Ovary (tissue), 10 donors: ENCODE measurements at regions of chr4 and their contacts with region 1.

Region 1: DNA sequence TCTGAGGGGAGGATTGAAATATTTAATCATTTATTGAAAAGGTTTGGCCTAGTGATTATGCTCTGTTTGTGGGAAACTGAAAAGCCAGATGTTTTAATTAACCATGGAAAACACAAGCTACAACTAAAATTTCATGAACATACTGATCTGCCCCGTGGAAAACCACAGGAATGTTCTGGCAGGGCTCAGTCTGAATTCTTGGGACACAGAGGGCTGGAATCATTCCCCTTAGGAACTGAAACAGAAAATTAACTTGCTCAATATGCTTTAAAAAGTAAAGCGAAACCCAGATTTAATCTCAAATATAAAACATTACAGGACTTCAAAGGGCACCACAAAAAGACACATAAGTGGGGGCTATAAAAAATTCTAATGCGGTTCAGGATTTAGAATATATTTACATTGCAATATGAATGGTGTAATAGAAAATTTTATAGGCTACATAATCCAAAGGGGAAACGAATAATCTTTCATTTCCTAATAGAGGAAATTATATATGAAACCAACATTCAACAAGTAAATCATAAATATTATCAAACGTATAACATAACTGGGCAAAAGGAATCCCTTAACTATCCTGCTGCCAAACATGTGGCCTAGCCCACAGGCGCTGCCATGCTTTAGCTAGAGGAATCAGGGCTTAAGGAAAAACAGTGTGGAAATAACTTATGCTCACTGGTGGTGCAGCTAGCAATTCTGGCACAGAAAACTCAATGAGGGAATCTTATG is 70.9 kb downstream of the APBB2 start:
- DNase-seq: peak in 3 of 5 donors; percentile 54 to 71 (median 66)
- H3K4me3 ChIP-seq: peak overlapping the region; percentile 10
- H3K27ac ChIP-seq: peak overlapping the region in 1 of 2 donors; percentile 71
- H3K4me1 ChIP-seq: peaks cover 25% of the 10 kb centered on the region
- H3K27me3 ChIP-seq: no peaks in the 10 kb centered on the region
- CTCF ChIP-seq: no peak
- EP300 ChIP-seq: no peak
- POLR2A ChIP-seq: no peak

Region 2: GRCh38 chr4:41196633-41197332 is 53.3 kb after region 1 on chr4:
- intact Hi-C with region 1: loop called in 1 of 4 experiments (anchors 10 kb)
- DNase-seq: peak in 1 of 5 donors; percentile 43
- H3K4me3 ChIP-seq: no peak overlapping the region
- H3K27ac ChIP-seq: peak overlapping the region in 1 of 2 donors; percentile 33
- H3K4me1 ChIP-seq: peaks cover 15% of the 10 kb centered on the region
- H3K27me3 ChIP-seq: no peaks in the 10 kb centered on the region
- CTCF ChIP-seq: no peak
- EP300 ChIP-seq: no peak
- POLR2A ChIP-seq: no peak